ENCODE measurements at regions of chr11 and their contacts with region 1.

Region 1: GRCh38 chr11:5460983-5461621 is 12.0 kb downstream of the OR51I2 start:
- DNase-seq: no peak
- H3K4me3 ChIP-seq: no peak overlapping the region
- H3K27ac ChIP-seq: no peak overlapping the region
- H3K4me1 ChIP-seq: no peaks in the 10 kb centered on the region
- H3K27me3 ChIP-seq: no peaks in the 10 kb centered on the region
- CTCF ChIP-seq: no peak
- EP300 ChIP-seq: no peak
- POLR2A ChIP-seq: no peak

Region 2: GRCh38 chr11:5489576-5490357 is 28.7 kb after region 1 on chr11:
- in situ Hi-C with region 1: no loop called
- intact Hi-C with region 1: loop called (anchors 2 kb)
- DNase-seq: no peak
- H3K4me3 ChIP-seq: no peak overlapping the region
- H3K27ac ChIP-seq: no peak overlapping the region
- H3K4me1 ChIP-seq: no peaks in the 10 kb centered on the region
- H3K27me3 ChIP-seq: no peaks in the 10 kb centered on the region
- CTCF ChIP-seq: no peak
- EP300 ChIP-seq: no peak
- POLR2A ChIP-seq: no peak